K562 (cell line): ENCODE measurements at regions of chr2 and their contacts with region 1.

Region 1: DNA sequence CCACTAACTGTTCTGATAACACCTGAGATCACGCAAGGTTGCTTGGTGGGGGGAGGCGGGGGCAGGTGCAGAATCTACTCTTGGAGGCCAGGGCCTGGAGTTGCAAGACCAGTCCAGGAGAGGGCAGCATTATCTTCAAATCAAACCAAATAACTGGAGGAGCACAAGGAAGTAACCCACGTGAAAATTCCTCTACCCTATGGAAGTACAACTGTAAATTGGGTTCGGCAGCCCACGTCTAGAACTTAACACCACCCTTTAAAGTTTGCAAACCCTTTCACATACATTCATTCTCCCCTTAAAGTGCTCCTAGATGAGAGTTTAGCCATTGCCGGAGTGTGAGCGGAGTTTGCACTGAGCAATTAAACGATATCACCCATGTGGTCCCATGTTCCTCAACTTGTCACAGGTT is 19.6 kb upstream of the CXCR1 start:
- DNase-seq: peak; percentile 66 to 78 (median 68)
- ATAC-seq: peak; percentile 96
- H3K4me3 ChIP-seq: no peak overlapping the region
- H3K27ac ChIP-seq: peak overlapping the region; percentile 31; the same call in 1 of the 3 replicates
- H3K4me1 ChIP-seq: peaks cover 0 to 8% of the 10 kb centered on the region in 2 experiments; a peak in 4 of 5 replicates
- H3K27me3 ChIP-seq: no peaks in the 10 kb centered on the region
- CTCF ChIP-seq: peak; percentile 73 to 79 (median 78)
- EP300 ChIP-seq: no peak
- POLR2A ChIP-seq: no peak
- RAD21 ChIP-seq: peak; percentile 57 to 67

Region 2: DNA sequence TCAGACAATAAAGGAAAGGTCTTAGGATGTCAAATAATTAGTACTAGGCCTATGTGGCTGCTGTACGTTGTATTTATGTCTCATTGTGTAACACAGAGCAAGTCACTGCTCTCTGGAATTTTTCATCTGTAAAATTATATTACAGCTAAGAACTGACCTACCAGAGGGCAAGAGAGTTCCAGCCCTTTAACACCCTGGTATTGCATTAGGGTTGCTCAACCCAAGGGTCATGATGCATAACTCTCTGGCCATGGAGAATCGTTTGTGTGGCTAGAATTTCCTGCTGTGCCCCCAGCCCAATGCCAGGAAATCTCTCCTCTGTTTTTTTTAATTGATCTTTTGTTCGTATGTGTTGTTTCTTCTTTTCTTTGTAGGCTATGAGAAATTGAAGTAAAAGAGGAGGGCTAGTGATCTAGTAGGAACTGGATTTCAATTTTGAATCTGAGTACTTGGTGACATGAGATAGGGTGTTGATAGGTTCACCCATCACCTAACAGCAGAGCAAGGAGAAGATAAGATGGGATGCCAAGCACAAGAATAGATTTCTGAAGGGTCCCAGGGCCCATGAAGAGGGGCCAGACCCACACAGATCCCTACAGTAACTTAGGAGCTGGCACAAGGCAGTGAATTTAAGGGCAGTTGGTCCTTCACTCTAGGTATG is 755.3 kb before region 1 on chr2:
- CTCF ChIA-PET with region 1: no interaction called
- POLR2A ChIA-PET with region 1: no interaction called
- in situ Hi-C with region 1: no loop called
- intact Hi-C with region 1: no loop called
- DNase-seq: no peak
- ATAC-seq: no peak
- H3K4me3 ChIP-seq: no peak overlapping the region
- H3K27ac ChIP-seq: no peak overlapping the region
- H3K4me1 ChIP-seq: peaks cover 0 to 7% of the 10 kb centered on the region in 2 experiments; a peak in 2 of 5 replicates
- H3K27me3 ChIP-seq: peaks cover 0 to 3% of the 10 kb centered on the region in 2 experiments; a peak in 1 of 5 replicates
- CTCF ChIP-seq: no peak
- EP300 ChIP-seq: no peak
- POLR2A ChIP-seq: no peak
- RAD21 ChIP-seq: no peak

Region 3: DNA sequence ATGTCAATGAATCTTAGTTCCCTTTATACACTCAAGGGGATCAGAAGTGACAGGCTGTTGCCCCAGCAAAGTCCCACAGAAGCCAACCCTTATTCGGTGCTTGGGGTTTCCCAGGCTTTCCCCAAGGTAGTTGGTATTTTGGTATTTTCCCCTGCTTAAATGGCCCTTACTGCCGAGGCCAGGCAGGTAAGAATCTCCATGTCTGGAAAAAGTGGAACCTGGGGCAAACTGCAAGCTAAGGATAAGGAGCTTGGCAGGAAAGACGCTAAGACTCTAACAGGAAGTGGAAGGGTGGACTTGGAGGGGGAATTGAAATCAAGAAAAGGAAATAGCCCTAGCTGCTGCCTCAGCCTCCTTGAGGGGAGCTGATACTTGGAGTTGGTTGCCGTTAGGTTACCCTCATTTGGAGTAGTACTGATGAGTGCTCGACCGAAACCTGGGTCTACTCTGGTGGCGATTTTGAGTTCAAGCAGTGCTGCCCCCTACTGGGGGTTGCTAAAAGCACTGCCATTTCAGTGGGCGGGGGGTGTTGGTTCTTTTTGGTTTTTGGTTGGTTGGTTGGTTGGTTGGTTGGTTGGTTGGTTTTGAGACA is 71.1 kb after region 1 on chr2:
- CTCF ChIA-PET with region 1: interaction called, 8 read pairs
- POLR2A ChIA-PET with region 1: no interaction called
- in situ Hi-C with region 1: no loop called
- intact Hi-C with region 1: loop called (anchors 2 kb)
- DNase-seq: peak; percentile 62 to 71 (median 66)
- ATAC-seq: peak; percentile 88
- H3K4me3 ChIP-seq: no peak overlapping the region
- H3K27ac ChIP-seq: peak overlapping the region; percentile 12; the same call in 2 of the 3 replicates
- H3K4me1 ChIP-seq: peaks cover 1 to 3% of the 10 kb centered on the region in 2 experiments; a peak in 4 of 5 replicates
- H3K27me3 ChIP-seq: no peaks in the 10 kb centered on the region
- CTCF ChIP-seq: peak; percentile 73 to 79 (median 75)
- EP300 ChIP-seq: no peak
- POLR2A ChIP-seq: no peak
- RAD21 ChIP-seq: peak in 1 of 2 experiments; percentile 56; a peak in 3 of 4 replicates

Region 4: GRCh38 chr2:218466016-218466521 is 279.7 kb after region 1 on chr2:
- CTCF ChIA-PET with region 1: no interaction called
- POLR2A ChIA-PET with region 1: no interaction called
- in situ Hi-C with region 1: no loop called
- intact Hi-C with region 1: loop called (anchors 10 kb)
- DNase-seq: peak in 1 of 4 experiments; percentile 12
- ATAC-seq: peak; percentile 67
- H3K4me3 ChIP-seq: no peak overlapping the region
- H3K27ac ChIP-seq: no peak overlapping the region
- H3K4me1 ChIP-seq: peaks cover 0 to under 1% of the 10 kb centered on the region in 2 experiments; a peak in 1 of 5 replicates
- H3K27me3 ChIP-seq: no peaks in the 10 kb centered on the region
- CTCF ChIP-seq: peak; percentile 17 to 52 (median 29); a peak in 3 of 6 replicates
- EP300 ChIP-seq: no peak
- POLR2A ChIP-seq: no peak
- RAD21 ChIP-seq: peak; percentile 34 to 56